Mammary epithelial cell (primary cell): ENCODE measurements at regions of chr3 and their contacts with region 1.

Region 1: DNA sequence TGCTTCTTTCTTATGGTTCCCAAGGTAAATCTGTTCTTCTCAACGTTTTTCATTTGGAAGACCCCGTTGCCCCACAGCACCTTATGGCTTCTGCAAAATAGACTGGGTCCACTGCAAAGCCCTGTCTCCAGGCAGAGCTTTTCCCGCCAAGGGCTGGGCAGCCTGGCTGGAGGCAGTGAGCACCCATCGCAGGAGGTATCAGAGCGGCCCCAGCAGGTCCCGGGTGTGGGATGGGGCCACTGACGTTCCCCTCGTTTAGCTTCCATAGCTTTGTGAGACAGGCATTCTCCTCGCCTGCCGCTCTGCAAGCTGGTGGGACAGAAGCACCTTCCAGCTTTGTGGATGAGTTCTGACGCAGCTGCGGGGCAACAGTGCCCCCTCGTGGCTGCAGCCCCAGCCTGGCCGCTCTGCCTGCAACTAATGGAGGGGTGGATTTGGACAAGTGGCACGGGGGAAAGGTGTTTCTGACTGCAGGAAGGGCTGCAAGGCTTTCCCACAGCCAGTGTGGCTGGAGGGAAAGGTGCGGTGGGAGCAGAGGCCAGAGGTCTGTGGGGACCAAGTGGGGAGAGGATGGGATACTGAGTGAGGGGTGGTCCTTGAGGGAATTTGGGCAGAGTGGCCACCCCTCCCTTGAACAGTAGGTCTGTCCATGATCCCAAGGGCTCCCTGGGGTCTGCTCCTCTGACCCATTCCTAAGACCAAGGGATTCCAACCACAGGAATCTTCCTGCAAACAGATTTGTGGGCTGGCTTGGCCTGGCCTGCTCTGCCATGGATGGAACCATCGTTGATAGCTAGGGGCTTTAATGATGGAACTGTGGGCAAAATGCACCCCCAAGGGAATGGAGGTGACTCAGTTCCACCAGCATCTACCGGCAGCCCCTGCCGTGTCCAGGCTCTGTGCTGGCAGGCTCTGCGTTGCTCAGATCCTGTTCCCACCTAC is 99.4 kb downstream of the FBLN2 start:
- DNase-seq: peak; percentile 70
- H3K4me3 ChIP-seq: no peak overlapping the region
- H3K27ac ChIP-seq: no peak overlapping the region
- H3K4me1 ChIP-seq: peaks cover 22% of the 10 kb centered on the region
- H3K27me3 ChIP-seq: no peaks in the 10 kb centered on the region
- CTCF ChIP-seq: peak; percentile 97 to 100

Region 2: DNA sequence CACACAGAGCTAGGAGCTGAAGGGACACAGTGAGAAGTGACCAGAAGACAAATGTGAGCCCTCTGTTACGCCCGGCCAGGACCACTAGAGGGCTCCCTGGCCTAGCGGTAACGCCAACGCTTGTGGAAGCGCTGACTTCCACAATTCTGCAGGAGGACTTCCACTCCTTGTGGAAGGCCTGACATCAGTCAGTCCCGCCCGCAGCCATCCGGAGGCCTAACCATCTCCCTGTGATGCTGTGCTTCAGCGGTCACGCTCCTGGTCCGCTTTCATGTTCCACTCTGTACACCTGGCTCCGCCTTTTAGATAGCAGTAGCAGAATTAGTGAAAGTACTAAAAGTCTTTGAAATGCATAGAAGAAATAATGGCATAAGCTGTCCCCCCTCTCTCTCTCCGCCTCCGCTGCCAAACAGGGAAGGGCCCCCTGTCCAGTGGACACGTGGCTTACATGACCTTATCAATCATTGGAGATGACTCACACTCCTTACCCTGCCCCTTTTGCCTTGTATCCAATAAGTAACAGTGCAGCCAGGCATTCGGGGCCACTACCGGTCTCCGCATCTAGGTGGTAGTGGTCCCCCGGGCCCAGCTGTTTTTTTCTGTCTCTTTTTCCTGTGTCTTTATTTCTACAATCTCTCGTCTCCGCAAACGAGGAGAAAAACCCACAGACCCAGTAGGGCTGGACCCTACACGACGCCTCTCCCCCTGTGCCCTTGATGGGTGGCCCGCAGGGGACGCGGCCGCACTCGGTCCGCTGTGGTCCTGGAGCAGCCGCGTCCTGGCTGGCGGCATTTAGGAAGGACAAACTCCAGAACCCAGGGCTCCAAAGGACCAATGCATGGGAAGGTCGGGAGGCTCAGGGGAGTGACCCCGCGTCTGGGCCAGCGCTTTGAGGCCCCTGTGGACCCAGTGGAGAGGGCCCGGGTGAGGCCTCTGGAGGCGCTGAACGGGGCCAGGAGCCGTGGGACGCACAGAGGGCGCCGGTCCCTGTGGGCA is 780.0 kb before region 1 on chr3:
- CTCF ChIA-PET with region 1: no interaction called
- dilution Hi-C with region 1: no loop called
- in situ Hi-C with region 1: no loop called
- intact Hi-C with region 1: loop called (anchors 1 kb)
- DNase-seq: peak; percentile 70
- H3K4me3 ChIP-seq: no peak overlapping the region
- H3K27ac ChIP-seq: no peak overlapping the region
- H3K4me1 ChIP-seq: no peaks in the 10 kb centered on the region
- H3K27me3 ChIP-seq: no peaks in the 10 kb centered on the region
- CTCF ChIP-seq: peak; percentile 78 to 92

Region 3: DNA sequence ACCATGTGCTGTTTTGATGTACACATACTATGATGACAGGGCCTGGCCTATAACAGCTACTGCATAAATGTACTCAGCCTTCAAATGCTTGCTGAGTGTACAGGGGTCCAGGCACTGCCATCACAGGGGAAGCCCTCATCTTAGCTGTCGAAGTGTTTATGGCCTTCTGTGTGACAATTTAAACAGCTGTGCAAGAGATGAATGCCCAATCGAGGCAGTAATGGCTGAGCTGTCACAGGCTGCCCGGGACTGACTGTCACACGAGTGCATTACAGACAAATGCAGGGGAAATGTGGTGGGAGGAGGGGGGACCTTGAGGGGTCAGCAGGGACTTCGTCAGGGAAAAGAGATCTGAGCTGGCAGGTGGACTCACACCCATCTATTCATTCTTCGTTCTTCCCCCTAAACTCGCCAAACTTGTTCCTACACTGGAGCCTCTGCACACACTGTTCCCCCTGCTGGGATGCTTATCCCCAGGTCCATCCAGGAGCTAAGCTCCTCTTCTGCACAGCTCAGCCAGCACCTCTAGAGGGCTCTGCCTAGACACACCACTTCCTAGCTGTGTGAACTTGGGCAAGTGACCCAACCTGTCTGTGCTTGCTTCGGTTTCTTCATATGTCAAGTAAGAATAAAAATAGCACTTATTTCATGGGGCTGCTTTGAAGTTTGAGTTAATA is 418.9 kb before region 1 on chr3:
- CTCF ChIA-PET with region 1: interaction called, 3 read pairs
- dilution Hi-C with region 1: no loop called
- in situ Hi-C with region 1: no loop called
- intact Hi-C with region 1: loop called (anchors 10 kb)
- DNase-seq: peak; percentile 61
- H3K4me3 ChIP-seq: no peak overlapping the region
- H3K27ac ChIP-seq: no peak overlapping the region
- H3K4me1 ChIP-seq: no peaks in the 10 kb centered on the region
- H3K27me3 ChIP-seq: no peaks in the 10 kb centered on the region
- CTCF ChIP-seq: peak; percentile 63 to 78

Region 4: GRCh38 chr3:13495921-13496723 is 152.2 kb before region 1 on chr3:
- CTCF ChIA-PET with region 1: interaction called, 34 read pairs
- dilution Hi-C with region 1: no loop called
- in situ Hi-C with region 1: loop called (anchors 5 kb)
- intact Hi-C with region 1: loop called (anchors 1 kb)
- DNase-seq: peak; percentile 57
- H3K4me3 ChIP-seq: no peak overlapping the region
- H3K27ac ChIP-seq: no peak overlapping the region
- H3K4me1 ChIP-seq: no peaks in the 10 kb centered on the region
- H3K27me3 ChIP-seq: no peaks in the 10 kb centered on the region
- CTCF ChIP-seq: peak; percentile 96

Region 5: GRCh38 chr3:13574798-13575451 is 73.4 kb before region 1 on chr3:
- CTCF ChIA-PET with region 1: interaction called, 4 read pairs
- dilution Hi-C with region 1: no loop called
- in situ Hi-C with region 1: no loop called
- intact Hi-C with region 1: loop called (anchors 1 kb)
- DNase-seq: no peak
- H3K4me3 ChIP-seq: no peak overlapping the region
- H3K27ac ChIP-seq: no peak overlapping the region
- H3K4me1 ChIP-seq: no peaks in the 10 kb centered on the region
- H3K27me3 ChIP-seq: peaks cover 3% of the 10 kb centered on the region
- CTCF ChIP-seq: no peak

Region 6: GRCh38 chr3:14467814-14468620 is 819.7 kb after region 1 on chr3:
- CTCF ChIA-PET with region 1: no interaction called
- dilution Hi-C with region 1: no loop called
- in situ Hi-C with region 1: no loop called
- intact Hi-C with region 1: loop called (anchors 10 kb)
- DNase-seq: no peak
- H3K4me3 ChIP-seq: no peak overlapping the region
- H3K27ac ChIP-seq: no peak overlapping the region
- H3K4me1 ChIP-seq: peaks cover 9% of the 10 kb centered on the region
- H3K27me3 ChIP-seq: no peaks in the 10 kb centered on the region
- CTCF ChIP-seq: peak; percentile 63 to 78